Posterior cingulate gyrus (tissue), 11 donors: ENCODE measurements at regions of chr3 and their contacts with region 1.

Region 1: DNA sequence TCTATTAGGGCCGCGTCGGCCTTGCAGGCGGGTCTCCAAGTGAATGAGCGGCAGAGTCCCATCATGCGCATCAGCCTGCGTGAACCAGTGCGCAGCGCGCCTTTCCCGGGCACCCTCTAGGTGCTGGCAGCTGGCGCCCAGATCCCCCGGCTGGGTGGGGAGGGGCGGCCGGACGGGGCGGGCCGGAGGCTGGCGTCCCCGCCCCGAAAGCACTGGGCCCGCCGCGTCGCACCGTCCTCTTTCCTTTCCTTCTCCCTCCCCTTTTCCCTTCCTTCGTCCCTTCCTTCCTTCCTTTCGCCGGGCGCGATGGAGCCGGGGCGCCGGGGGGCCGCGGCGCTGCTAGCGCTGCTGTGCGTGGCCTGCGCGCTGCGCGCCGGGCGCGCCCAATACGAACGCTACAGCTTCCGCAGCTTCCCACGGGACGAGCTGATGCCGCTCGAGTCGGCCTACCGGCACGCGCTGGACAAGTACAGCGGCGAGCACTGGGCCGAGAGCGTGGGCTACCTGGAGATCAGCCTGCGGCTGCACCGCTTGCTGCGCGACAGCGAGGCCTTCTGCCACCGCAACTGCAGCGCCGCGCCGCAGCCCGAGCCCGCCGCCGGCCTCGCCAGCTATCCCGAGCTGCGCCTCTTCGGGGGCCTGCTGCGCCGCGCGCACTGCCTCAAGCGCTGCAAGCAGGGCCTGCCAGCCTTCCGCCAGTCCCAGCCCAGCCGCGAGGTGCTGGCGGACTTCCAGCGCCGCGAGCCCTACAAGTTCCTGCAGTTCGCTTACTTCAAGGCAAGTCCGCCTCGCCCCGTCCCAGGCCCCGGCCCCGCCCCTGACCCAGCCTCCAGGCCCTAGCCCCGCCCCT is at the start of gene CRTAP:
- DNase-seq: peak; percentile 78 to 98 (median 90)

Region 2: DNA sequence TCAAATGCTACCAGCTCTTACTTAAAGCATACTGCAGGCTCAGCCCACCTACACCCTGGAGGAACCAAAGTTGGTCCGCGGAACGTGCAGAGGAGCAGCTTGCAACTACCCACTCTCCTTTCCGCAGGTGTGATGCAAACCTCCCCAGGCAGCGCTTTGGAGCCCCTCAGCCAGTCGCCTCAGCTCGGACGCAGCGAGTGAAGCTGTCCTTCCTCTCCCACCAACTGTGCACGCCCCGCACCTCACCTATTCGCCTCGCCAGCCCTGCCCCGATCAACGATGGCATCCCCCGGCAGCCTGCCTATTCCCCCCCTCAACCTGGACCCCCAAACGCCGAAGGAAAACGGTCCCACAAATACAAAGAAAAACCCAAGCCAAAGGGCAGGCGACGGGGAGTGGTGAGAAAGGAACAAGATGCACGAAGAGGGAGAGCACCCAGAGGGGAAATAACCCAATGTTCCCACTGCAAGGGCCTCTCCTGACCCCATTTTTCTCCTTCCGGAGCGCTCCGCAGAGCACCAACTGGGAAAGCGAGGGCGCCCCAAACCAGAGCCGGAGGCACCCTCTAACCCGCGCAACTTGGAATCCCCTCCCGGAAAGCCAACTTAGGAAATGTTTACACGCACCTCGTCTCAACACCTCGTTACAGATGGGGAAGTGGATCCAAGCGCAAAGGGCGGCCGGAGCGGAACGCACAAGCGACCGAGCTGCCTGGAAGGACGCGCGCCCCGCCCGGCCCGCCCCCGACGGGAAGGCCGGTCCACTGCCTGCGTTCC is 17.7 kb before region 1 on chr3:
- intact Hi-C with region 1: loop called (anchors 2 kb)
- DNase-seq: peak; percentile 37 to 93 (median 53)

Region 3: DNA sequence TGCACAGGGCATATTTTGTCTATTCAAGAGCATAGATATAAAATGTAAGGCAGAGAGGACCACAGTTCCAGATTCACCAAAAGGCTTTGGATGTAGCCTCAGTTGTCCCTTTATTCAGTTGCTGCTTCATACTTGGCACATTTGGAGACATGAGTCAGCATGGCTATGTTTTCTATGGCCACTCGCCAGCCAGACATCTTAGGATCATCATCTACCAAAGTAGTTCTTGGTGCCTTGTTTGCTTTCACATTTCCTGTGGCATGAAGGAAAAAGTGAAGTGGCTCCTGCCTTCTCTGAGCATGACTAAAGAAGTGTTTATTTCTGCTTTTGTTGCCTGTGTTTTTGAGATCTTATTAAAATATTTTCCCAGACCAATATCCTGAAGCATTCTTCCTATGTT is 97.4 kb after region 1 on chr3:
- intact Hi-C with region 1: no loop called
- DNase-seq: no peak